ENCODE measurements at regions of chr15 and their contacts with region 1.

Region 1: DNA sequence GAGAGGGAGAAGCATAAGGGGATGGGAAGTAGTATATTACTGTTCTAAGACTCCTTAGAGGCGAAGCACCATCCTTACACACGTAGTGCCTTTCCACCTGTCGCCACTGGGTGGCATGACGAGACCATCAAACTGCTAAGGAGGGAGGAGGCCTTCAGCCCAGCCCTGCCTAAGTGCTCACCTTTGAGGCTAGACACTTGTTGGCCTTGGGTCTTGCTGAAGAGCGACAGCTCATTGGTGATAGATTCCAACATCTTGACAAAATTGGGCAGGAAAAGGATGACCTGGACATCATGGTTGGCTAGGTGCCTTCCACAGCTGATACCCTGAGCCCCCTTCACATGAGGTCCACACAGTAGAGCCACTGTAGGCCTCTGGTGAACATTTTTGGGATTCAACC is 19.6 kb downstream of the CLK3 start:
- DNase-seq: peak; percentile 54 to 68
- ATAC-seq: peak; percentile 75 to 85
- H3K4me3 ChIP-seq: no peak overlapping the region
- H3K27ac ChIP-seq: no peak overlapping the region; a peak in 1 of 6 replicates
- H3K4me1 ChIP-seq: no peaks in the 10 kb centered on the region
- CTCF ChIP-seq: peak; percentile 72
- EP300 ChIP-seq: no peak
- POLR2A ChIP-seq: no peak
- RAD21 ChIP-seq: peak; percentile 80 to 88

Region 2: DNA sequence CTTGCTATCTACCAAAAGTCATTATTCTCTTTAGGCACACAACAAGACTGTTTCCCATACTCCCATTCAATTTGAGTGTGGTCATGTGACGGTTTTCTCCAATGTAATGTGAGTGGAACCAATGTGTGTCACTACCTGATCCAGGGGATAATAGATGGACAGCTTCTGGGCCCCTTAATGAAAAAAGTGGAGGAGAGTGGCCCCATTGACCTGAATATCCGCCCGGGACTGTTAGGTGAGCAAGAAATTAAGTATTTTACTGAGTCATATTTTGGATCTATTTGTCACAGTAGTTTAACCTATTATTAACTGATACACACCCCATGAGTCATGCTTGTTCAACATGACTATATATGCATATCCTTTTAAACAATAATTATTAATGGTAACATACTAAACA is 109.3 kb before region 1 on chr15:
- CTCF ChIA-PET with region 1: no interaction called
- POLR2A ChIA-PET with region 1: no interaction called
- DNase-seq: peak in 1 of 2 experiments; percentile 45
- ATAC-seq: peak; percentile 43 to 81; a peak in 4 of 6 replicates
- H3K4me3 ChIP-seq: no peak overlapping the region
- H3K27ac ChIP-seq: peak overlapping the region in 1 of 2 experiments; percentile 12; a peak in 1 of 6 replicates
- H3K4me1 ChIP-seq: peaks cover 18% of the 10 kb centered on the region
- CTCF ChIP-seq: no peak
- EP300 ChIP-seq: no peak
- POLR2A ChIP-seq: no peak
- RAD21 ChIP-seq: no peak

Region 3: DNA sequence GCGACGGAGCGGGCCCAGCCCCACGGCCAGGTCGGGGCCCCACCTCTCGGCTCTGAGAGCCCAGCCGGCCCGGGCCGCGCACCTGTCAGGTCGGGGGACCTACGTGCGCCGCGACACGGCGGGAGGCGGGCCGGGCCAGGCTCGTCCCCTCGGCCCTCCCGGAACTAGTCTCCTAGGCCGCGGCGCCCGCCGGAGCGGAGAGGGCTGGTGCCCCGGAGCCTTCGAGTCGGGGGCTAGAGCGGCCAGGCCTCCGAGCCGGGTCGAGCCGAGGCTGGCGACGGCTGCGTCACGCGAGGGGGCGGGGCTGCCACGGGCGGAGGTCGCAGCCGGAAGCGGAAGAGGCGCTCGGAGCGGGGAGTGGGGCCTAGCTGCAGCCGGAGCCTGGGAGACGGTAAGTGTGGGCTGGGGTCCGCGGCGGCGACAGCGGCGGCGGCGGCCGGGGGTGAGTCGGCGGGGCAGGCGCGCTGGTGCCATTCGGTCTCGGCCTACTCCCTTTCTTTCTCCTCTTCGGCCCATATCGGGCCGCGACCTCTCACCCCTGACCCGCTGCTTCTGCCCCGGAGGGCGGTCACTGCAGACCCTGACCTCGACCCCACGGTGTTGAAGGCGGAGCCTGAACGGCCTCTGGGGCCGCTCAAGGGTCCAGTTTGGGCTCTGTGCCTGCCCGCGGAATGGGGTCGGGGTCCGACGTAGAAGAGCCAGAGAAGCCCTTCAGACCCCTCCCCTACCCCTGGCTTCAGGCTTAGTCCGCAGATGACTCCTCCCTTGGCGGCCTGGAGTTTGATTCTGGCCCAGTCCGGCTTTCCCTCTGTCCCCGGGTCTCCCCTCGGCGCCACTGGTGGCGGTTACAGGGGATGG is 19.5 kb before region 1 on chr15 and contains the start of gene CLK3:
- CTCF ChIA-PET with region 1: interaction called, 218 read pairs
- POLR2A ChIA-PET with region 1: no interaction called
- DNase-seq: peak; percentile 78 to 92
- ATAC-seq: peak; percentile 82 to 90
- H3K4me3 ChIP-seq: peak within 1 kb of the TSS; percentile 93
- H3K27ac ChIP-seq: peak within 1 kb of the TSS; percentile 91 to 98
- H3K4me1 ChIP-seq: peaks cover 14% of the 10 kb centered on the region; the same call in 1 of the 3 replicates
- CTCF ChIP-seq: no peak
- EP300 ChIP-seq: peak in 1 of 2 experiments; percentile 27; a peak in 1 of 5 replicates
- POLR2A ChIP-seq: peak; percentile 56
- RAD21 ChIP-seq: no peak
- polyA plus RNA-seq, gene CLK3: 35.7 and 42.5 TPM in 2 replicates

Region 4: GRCh38 chr15:74723754-74724334 is 88.6 kb after region 1 on chr15:
- CTCF ChIA-PET with region 1: interaction called, 12 read pairs
- POLR2A ChIA-PET with region 1: no interaction called
- DNase-seq: peak; percentile 47 to 51
- ATAC-seq: peak in 1 of 2 experiments; percentile 55; a peak in 3 of 6 replicates
- H3K4me3 ChIP-seq: no peak overlapping the region
- H3K27ac ChIP-seq: no peak overlapping the region
- H3K4me1 ChIP-seq: peaks cover 4% of the 10 kb centered on the region; the same call in 1 of the 3 replicates
- CTCF ChIP-seq: no peak
- EP300 ChIP-seq: no peak
- POLR2A ChIP-seq: no peak
- RAD21 ChIP-seq: no peak

Region 5: DNA sequence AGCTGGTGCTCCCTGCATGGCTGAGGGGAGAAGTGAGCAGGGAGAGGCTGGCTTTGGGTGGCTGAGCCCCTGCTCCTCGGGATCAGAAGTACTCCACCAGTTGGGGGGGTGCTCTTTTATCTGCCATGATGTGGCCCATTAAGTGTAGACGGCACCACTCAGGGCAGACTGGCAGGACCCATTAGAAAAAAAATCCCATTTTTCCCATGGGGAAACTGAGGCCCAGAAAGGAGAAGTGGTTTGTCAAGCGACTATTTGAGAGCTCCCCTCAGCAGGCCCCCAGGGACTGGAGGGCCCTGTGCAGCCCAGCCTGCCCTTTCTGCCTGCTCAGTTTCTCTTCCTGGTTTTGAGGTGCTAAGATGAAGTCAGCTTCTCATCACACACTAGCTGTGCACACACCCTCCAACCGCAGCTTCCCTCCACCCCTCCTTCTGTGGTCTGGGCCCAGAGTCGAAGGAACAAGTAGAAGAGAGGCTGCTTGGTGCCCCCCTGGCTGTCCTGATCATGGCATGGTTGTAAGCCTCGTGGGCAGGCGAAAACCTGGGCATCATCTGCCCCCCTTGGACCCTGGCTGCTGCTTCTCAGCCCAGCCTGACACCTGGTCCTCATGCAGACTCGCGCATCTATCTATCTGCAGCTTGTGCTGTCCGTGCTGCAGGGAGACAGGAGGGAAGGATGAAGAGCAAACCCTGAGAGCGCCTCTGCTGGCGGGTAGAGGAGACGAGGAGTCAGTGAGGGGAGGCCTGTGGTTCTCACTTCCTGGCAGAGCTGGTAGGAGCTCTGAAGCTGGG is 152.2 kb after region 1 on chr15:
- CTCF ChIA-PET with region 1: interaction called, 24 read pairs
- POLR2A ChIA-PET with region 1: no interaction called
- DNase-seq: peak; percentile 82 to 84
- ATAC-seq: peak; percentile 87 to 95
- H3K4me3 ChIP-seq: no peak overlapping the region
- H3K27ac ChIP-seq: no peak overlapping the region
- H3K4me1 ChIP-seq: peaks cover 31% of the 10 kb centered on the region
- CTCF ChIP-seq: peak; percentile 50
- EP300 ChIP-seq: no peak
- POLR2A ChIP-seq: no peak
- RAD21 ChIP-seq: no peak